Activated B cell treated with CpG ODN at 0.5 μM for 24 hours (primary cell): ENCODE measurements at regions of chr15 and their contacts with region 1.

Region 1: DNA sequence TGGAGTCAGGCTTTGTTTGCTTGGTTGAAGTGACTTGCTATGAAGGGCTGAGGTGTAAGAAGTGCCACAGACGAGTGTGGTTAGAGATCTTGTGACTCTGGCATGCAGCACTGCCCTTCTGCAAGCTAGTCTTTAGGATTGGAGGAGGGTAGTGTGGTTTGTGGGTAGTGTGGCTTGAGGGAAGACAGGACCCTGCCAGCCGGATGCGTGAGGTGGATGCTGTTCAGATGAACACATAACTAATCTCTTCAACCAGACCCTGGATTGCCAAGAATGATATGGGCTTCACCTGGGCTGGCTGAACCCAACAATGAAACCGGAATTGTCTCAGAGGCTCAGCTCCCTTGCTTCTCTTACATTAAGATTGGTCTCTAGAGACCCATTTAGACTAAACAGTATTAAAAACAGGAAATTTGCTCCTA is 32.7 kb downstream of the STARD9 start:
- DNase-seq: no peak
- ATAC-seq: peak; percentile 62
- H3K4me3 Mint-ChIP-seq: peak overlapping the region; percentile 22
- H3K27ac Mint-ChIP-seq: peak overlapping the region; percentile 69
- H3K4me1 Mint-ChIP-seq: peaks cover 53% of the 10 kb centered on the region
- H3K27me3 Mint-ChIP-seq: no peaks in the 10 kb centered on the region
- CTCF ChIP-seq: no peak

Region 2: DNA sequence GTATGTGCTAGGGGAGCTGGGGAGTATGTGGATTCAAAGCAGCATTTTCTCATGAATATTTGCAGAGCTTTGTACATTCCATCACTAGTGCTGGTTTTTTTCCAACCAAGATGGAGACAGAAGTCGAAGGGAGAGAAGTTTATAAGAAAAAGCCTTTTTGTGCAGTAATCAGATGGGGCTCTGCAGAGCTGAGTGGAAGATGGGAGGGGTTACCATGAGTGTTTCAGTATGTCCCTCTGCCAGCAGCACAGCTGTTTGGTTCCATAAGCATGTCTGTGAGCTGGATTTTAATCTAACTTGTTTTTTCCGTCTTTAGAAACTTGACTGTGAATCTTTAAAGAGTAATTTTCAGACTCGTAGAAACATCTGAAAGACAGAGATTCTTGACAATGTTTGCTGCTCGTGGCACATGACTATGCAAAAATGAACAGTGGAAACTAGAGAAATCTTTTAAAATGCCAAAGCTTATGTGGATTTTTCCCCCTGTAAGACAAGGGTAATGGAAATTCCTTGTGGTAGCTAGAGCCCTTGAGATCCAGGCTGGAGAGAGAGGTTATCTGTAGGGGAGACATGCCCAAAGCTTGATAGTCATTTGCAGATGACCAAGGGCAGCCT is 12.4 kb before region 1 on chr15:
- CTCF ChIA-PET with region 1: no interaction called
- POLR2A ChIA-PET with region 1: interaction called, 10 read pairs
- intact Hi-C with region 1: no loop called
- DNase-seq: no peak
- ATAC-seq: no peak
- H3K4me3 Mint-ChIP-seq: no peak overlapping the region
- H3K27ac Mint-ChIP-seq: no peak overlapping the region
- H3K4me1 Mint-ChIP-seq: no peaks in the 10 kb centered on the region
- H3K27me3 Mint-ChIP-seq: no peaks in the 10 kb centered on the region
- CTCF ChIP-seq: no peak